Activated T-helper 1 cell treated with anti-CD3 and anti-CD28 coated beads, Interleukin-12 subunit alpha, Interleukin-12 subunit beta, Interleukin-2, Interleukin-4 antibody, amounts not matched to agents 30 ng/mL and 10 ng/mL and 1 ng/mL, durations not matched to agents 14 hours and 24 hours and 36 hours (primary cell): ENCODE measurements at regions of chr12 and their contacts with region 1.

Region 1: DNA sequence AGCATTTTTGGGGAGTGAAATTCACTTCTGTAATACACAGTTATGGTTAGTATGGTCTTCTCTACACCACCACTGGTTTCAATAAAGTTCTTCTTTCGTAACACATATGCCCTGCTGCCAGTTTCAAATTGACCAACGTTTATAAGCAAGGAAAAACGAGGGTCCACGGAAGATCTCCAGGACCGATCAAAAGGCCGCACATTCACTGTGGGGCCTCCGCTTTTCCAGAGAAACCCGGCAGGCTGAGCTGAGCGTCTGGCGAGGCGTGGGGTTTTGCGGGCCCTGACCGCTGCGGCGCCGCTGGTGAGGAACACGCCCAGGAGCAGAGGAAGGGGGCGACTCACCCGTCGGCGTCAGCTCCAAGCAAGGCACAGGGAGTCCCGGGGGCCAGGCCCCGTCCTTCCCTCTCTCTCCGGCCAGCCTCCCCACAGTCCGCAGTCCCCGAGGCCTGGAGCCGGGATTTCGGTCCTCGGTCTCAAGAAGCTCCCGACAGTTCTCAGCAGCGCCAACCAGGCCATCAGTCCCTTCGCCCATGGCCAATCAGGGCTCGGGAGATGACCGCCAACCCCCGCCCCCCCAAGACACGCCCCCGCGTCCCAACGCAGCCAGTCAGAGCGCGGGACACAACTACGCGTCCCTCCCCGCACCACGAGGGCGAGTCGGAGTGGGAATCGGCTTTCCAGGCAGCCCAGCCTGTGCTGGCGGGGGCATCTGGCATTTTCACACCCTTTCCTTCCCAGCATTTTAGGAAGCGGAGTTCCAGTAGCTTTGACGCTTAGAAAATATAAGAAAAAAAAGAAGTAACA is at the start of gene MTERF2:
- DNase-seq: peak; percentile 69
- H3K4me3 Mint-ChIP-seq: peak within 1 kb of the TSS; percentile 91
- H3K27ac Mint-ChIP-seq: peak within 1 kb of the TSS; percentile 85
- H3K4me1 Mint-ChIP-seq: peaks cover 41% of the 10 kb centered on the region
- H3K27me3 Mint-ChIP-seq: peaks cover 2% of the 10 kb centered on the region
- total RNA-seq, gene MTERF2: 3.9 and 5.2 TPM in 2 replicates

Region 2: GRCh38 chr12:106955377-106956047 is 31.3 kb before region 1 on chr12 and contains the start of gene TMEM263:
- intact Hi-C with region 1: loop called (anchors 1 kb)
- DNase-seq: peak; percentile 90
- H3K4me3 Mint-ChIP-seq: peak within 1 kb of the TSS; percentile 97
- H3K27ac Mint-ChIP-seq: peak within 1 kb of the TSS; percentile 94
- H3K4me1 Mint-ChIP-seq: peaks cover 21% of the 10 kb centered on the region
- H3K27me3 Mint-ChIP-seq: peaks cover 3% of the 10 kb centered on the region
- total RNA-seq, gene TMEM263: 25.5 and 25.9 TPM in 2 replicates

Region 3: DNA sequence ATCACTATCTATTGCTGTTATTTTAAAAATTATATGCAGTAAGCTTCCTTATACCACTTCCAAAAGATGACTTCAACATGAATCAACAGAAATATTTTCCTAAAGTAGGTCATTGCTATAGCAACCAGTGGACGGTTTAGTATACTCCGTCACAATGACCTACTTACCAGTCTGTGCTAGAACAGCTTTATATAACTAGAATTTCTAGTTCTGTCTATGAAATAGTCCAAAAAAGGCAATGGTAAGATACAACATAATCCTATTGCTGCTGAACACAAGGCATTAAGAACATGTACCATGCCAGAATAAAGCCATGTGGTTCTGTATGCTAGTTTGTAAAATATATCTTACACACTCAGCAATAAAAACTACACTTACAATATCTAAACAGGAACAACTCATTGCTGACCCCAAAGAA is 40.8 kb after region 1 on chr12:
- intact Hi-C with region 1: loop called (anchors 2 kb)
- DNase-seq: no peak
- H3K4me3 Mint-ChIP-seq: no peak overlapping the region
- H3K27ac Mint-ChIP-seq: peak overlapping the region; percentile 12
- H3K4me1 Mint-ChIP-seq: peaks cover 10% of the 10 kb centered on the region
- H3K27me3 Mint-ChIP-seq: no peaks in the 10 kb centered on the region

Region 4: GRCh38 chr12:107057071-107057818 is 70.4 kb after region 1 on chr12:
- intact Hi-C with region 1: no loop called
- DNase-seq: no peak
- H3K4me3 Mint-ChIP-seq: no peak overlapping the region
- H3K27ac Mint-ChIP-seq: no peak overlapping the region
- H3K4me1 Mint-ChIP-seq: no peaks in the 10 kb centered on the region
- H3K27me3 Mint-ChIP-seq: peaks cover 5% of the 10 kb centered on the region